Gastrocnemius medialis (tissue), 4 donors: ENCODE measurements at regions of chr1 and their contacts with region 1.

Region 1: DNA sequence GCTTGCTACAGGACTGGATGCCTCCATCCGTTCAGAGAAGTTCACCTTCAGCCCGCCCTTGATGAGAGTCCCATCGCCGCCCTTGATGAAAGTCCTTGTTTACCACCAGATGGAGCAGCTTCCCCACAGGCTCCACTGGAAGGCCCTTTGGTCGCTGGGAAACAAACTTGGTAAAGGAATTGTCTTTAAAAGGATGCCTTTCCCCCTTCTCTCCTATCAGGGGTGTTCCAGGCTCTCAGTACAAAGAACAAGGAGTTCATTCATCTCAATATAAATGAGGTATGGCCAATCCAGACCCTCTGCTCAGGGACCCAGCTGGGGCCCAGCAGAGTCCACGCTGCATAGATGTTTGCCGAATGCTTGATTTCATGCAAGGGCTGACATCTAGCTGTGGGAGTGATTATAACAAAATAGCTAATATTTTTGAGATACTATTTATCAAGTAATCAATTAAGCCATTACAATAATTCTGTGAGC is 50.8 kb downstream of the CAPN9 start:
- DNase-seq: peak; percentile 35 to 57
- ATAC-seq: peak; percentile 83 to 96
- H3K4me3 ChIP-seq: no peak overlapping the region
- H3K27ac ChIP-seq: no peak overlapping the region
- H3K4me1 ChIP-seq: no peaks in the 10 kb centered on the region
- H3K27me3 ChIP-seq: no peaks in the 10 kb centered on the region
- CTCF ChIP-seq: peak; percentile 65 to 82 (median 77)
- POLR2A ChIP-seq: no peak

Region 2: GRCh38 chr1:230909974-230910754 is 112.2 kb after region 1 on chr1:
- in situ Hi-C with region 1: loop called in 2 of 4 experiments (anchors 5 to 10 kb)
- intact Hi-C with region 1: no loop called
- DNase-seq: peak in 1 of 2 donors; percentile 56
- ATAC-seq: peak in 1 of 2 donors; percentile 94
- H3K4me3 ChIP-seq: no peak overlapping the region
- H3K27ac ChIP-seq: peak overlapping the region in 1 of 4 donors; percentile 14
- H3K4me1 ChIP-seq: peaks cover 3 to 9% of the 10 kb centered on the region in 2 donors
- H3K27me3 ChIP-seq: no peaks in the 10 kb centered on the region
- CTCF ChIP-seq: no peak
- POLR2A ChIP-seq: no peak

Region 3: GRCh38 chr1:230917284-230918135 is 119.5 kb after region 1 on chr1:
- in situ Hi-C with region 1: loop called in 3 of 4 experiments (anchors 5 to 10 kb)
- intact Hi-C with region 1: loop called (anchors 1 kb)
- DNase-seq: peak; percentile 19 to 48
- ATAC-seq: peak; percentile 70 to 81
- H3K4me3 ChIP-seq: no peak overlapping the region
- H3K27ac ChIP-seq: no peak overlapping the region
- H3K4me1 ChIP-seq: no peaks in the 10 kb centered on the region
- H3K27me3 ChIP-seq: no peaks in the 10 kb centered on the region
- CTCF ChIP-seq: peak; percentile 42 to 63 (median 51)
- POLR2A ChIP-seq: no peak

Region 4: DNA sequence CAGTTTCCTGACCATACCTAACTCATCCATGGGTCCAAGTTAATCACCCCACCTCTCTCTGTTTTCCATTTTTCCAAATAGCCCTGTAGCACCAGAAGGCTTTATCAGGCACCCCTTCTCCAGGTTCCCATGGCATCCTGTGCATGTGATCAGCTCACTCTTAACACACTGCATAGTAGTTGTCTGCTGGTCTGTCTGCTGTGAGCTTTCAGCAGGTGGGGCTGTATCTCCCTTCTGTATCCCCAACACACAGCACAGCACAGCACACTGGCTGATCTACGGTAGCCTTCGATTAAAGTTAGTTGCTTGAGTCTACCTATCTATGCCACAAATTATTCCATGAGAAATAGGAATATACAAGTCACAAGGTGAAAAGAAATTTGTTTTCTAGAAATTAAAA is 124.6 kb after region 1 on chr1:
- in situ Hi-C with region 1: loop called in 2 of 4 experiments (anchors 10 kb)
- intact Hi-C with region 1: loop called (anchors 1 kb)
- DNase-seq: no peak
- ATAC-seq: no peak
- H3K4me3 ChIP-seq: no peak overlapping the region
- H3K27ac ChIP-seq: no peak overlapping the region
- H3K4me1 ChIP-seq: no peaks in the 10 kb centered on the region
- H3K27me3 ChIP-seq: no peaks in the 10 kb centered on the region
- CTCF ChIP-seq: no peak
- POLR2A ChIP-seq: no peak

Region 5: GRCh38 chr1:230978491-230979388 is 180.8 kb after region 1 on chr1 and contains the starts of genes ARV1 and TTC13:
- in situ Hi-C with region 1: no loop called
- intact Hi-C with region 1: loop called (anchors 5 kb)
- DNase-seq: peak; percentile 98
- ATAC-seq: peak; percentile 96 to 97
- H3K4me3 ChIP-seq: peak within 1 kb of the TSS; percentile 84 to 96 (median 88)
- H3K27ac ChIP-seq: peak within 1 kb of the TSS; percentile 71 to 82 (median 78)
- H3K4me1 ChIP-seq: peaks cover 17 to 24% of the 10 kb centered on the region in 2 donors
- H3K27me3 ChIP-seq: no peaks in the 10 kb centered on the region
- CTCF ChIP-seq: peak in 4 of 5 experiments; percentile 8 to 29 (median 23)
- POLR2A ChIP-seq: peak; percentile 48 to 56
- total RNA-seq, gene ARV1: 7.9 to 21.3 (median 10.5) TPM
- total RNA-seq, gene TTC13: 16.0 to 36.0 (median 22.7) TPM

Region 6: DNA sequence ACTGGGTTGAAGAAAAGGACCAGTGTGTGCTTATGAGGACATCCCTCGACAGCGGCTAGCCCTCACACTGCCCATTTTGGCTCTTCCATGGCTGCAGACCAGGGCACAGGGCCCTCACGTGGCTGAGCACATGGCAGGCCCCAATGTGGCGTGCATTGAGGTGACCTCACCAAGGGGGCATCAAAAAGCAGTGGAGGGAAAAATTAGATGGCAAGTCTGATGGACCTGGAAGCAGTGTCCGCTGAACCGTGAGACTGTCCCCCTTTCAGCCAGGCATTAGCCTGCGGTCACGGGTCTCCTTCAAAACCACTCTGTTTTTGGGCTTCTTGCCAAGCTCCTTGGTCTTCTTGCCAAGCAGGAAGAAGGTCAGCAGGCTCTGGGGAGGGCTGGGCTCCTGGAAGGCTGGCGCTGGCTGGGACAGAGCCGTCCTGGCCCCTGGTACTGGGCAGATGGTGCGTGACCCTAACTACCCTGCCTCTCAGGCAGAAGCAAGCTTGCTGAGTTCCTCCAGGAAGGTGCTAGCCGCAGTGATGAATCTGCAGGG is 394.7 kb after region 1 on chr1:
- in situ Hi-C with region 1: loop called in 1 of 4 experiments (anchors 25 kb)
- intact Hi-C with region 1: no loop called
- DNase-seq: peak in 1 of 2 donors; percentile 24
- ATAC-seq: peak; percentile 39 to 56
- H3K4me3 ChIP-seq: no peak overlapping the region
- H3K27ac ChIP-seq: no peak overlapping the region
- H3K4me1 ChIP-seq: peaks cover 7% of the 10 kb centered on the region in 2 donors
- H3K27me3 ChIP-seq: peaks cover 0 to 3% (median 0%) of the 10 kb centered on the region in 3 donors
- CTCF ChIP-seq: no peak
- POLR2A ChIP-seq: no peak

Region 7: GRCh38 chr1:231211005-231211857 is 413.3 kb after region 1 on chr1:
- in situ Hi-C with region 1: loop called in 2 of 4 experiments (anchors 5 to 25 kb)
- intact Hi-C with region 1: loop called (anchors 1 kb)
- DNase-seq: peak; percentile 19 to 72
- ATAC-seq: peak; percentile 78 to 92
- H3K4me3 ChIP-seq: peak overlapping the region; percentile 38 to 71 (median 51)
- H3K27ac ChIP-seq: no peak overlapping the region
- H3K4me1 ChIP-seq: no peaks in the 10 kb centered on the region
- H3K27me3 ChIP-seq: peaks cover 0 to 4% (median 0%) of the 10 kb centered on the region in 3 donors
- CTCF ChIP-seq: peak; percentile 76 to 90 (median 88)
- POLR2A ChIP-seq: no peak